ENCODE measurements at regions of chr6 and their contacts with region 1.

Region 1: DNA sequence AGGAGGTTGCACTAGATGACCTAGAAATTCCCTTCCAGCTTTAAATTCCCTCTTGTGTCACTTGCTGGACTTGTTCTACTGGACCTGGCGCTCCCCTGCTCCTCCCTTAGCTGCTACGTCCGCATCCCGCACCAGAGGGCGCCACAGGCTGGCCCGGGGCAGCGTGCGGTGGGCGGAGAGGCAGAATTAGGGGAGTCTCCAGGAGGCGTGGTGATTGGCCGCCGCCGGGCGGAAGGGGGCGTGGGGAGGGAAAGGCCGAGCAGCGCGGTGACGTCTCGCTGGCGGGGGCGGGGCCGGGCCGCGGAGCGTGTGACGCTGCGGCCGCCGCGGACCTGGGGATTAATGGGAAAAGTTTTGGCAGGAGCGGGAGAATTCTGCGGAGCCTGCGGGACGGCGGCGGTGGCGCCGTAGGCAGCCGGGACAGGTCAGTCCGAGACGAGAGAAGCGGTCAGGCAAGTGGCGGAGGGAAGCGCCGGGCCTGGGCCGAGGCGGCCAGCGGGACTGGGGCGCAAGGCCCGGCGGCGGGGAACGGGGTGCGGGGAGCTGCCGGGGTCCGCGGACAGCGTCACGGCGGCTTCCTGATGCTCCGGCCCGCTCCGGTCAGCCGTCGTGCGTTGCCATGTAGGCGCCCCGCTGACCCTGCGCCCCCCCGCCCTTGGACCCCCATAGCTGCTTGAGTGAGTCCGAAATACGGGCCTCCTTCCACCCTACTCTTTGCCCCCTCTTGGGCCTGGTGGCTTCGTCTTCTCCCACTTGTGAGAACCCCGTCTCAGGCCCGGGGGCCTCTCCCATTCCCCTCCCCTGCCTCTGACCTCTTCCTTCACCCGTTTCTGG is at the start of gene PPARD:
- DNase-seq: peak; percentile 38
- H3K4me3 ChIP-seq: peak within 1 kb of the TSS; percentile 84
- CTCF ChIP-seq: peak; percentile 100

Region 2: GRCh38 chr6:34986845-34987246 is 355.6 kb before region 1 on chr6:
- CTCF ChIA-PET with region 1: no interaction called
- POLR2A ChIA-PET with region 1: no interaction called
- DNase-seq: no peak
- H3K4me3 ChIP-seq: no peak overlapping the region
- CTCF ChIP-seq: peak; percentile 48

Region 3: DNA sequence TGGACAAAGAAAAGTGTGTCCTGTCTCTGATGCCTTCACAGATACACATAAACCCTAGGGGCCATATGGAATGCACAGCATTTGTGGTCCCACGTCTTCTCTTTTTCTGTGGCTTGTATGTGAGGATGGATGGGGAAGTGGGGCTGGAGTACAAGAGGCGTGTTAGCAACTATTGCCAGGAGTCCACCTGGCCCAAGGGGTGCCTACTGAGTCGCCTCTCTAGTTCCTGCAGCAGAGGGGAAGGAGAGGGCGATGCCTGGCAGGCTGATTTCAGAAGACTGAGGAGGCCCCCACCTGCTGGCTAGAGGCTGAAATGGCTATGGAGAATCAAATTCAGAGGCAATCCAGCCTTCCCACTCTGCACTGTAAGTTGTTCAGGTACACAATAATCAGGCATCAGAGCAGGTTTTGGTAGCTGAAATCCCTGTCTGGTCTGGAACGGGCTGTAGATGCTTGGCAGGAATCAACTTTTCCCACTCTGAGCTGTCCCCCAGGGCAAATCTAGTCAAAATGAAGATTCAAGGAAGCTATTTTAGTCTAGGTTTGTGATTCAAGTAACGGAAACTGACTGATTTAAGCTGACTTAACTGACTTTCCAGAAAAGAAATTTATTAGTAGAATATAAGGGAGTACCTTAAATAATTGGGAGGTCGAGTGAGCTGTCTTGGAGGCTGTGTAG is 15.0 kb before region 1 on chr6:
- CTCF ChIA-PET with region 1: interaction called, 34 read pairs
- POLR2A ChIA-PET with region 1: no interaction called
- DNase-seq: no peak
- H3K4me3 ChIP-seq: no peak overlapping the region
- CTCF ChIP-seq: peak; percentile 81

Region 4: GRCh38 chr6:35359751-35360348 is 17.4 kb after region 1 on chr6:
- CTCF ChIA-PET with region 1: interaction called, 41 read pairs
- POLR2A ChIA-PET with region 1: interaction called, 3 read pairs
- DNase-seq: peak; percentile 73
- H3K4me3 ChIP-seq: no peak overlapping the region
- CTCF ChIP-seq: no peak

Region 5: GRCh38 chr6:35425284-35425683 is 82.8 kb after region 1 on chr6:
- CTCF ChIA-PET with region 1: interaction called, 125 read pairs
- POLR2A ChIA-PET with region 1: no interaction called
- DNase-seq: peak; percentile 84
- H3K4me3 ChIP-seq: no peak overlapping the region
- CTCF ChIP-seq: no peak

Region 6: GRCh38 chr6:35463292-35463691 is 120.8 kb after region 1 on chr6:
- CTCF ChIA-PET with region 1: interaction called, 68 read pairs
- POLR2A ChIA-PET with region 1: interaction called, 6 read pairs
- DNase-seq: no peak
- H3K4me3 ChIP-seq: no peak overlapping the region
- CTCF ChIP-seq: no peak